CD8-positive, alpha-beta T cell (primary cell): ENCODE measurements at regions of chr1 and their contacts with region 1.

Region 1: GRCh38 chr1:205227584-205228006 is at the start of gene TMCC2:
- DNase-seq: peak; percentile 59 to 92 (median 85)
- ATAC-seq: peak; percentile 82
- H3K4me3 ChIP-seq: peak within 1 kb of the TSS; percentile 60 to 70
- H3K4me3 Mint-ChIP-seq: peak within 1 kb of the TSS; percentile 91
- H3K27ac ChIP-seq: no peak within 1 kb of the TSS
- H3K27ac Mint-ChIP-seq: peak within 1 kb of the TSS; percentile 82
- H3K4me1 ChIP-seq: peaks cover 12% of the 10 kb centered on the region
- H3K4me1 Mint-ChIP-seq: peaks cover 31% of the 10 kb centered on the region
- H3K27me3 ChIP-seq: no peaks in the 10 kb centered on the region
- H3K27me3 Mint-ChIP-seq: peaks cover 5% of the 10 kb centered on the region
- CTCF ChIP-seq: no peak
- total RNA-seq, gene TMCC2: 1.5 to 2.0 TPM

Region 2: DNA sequence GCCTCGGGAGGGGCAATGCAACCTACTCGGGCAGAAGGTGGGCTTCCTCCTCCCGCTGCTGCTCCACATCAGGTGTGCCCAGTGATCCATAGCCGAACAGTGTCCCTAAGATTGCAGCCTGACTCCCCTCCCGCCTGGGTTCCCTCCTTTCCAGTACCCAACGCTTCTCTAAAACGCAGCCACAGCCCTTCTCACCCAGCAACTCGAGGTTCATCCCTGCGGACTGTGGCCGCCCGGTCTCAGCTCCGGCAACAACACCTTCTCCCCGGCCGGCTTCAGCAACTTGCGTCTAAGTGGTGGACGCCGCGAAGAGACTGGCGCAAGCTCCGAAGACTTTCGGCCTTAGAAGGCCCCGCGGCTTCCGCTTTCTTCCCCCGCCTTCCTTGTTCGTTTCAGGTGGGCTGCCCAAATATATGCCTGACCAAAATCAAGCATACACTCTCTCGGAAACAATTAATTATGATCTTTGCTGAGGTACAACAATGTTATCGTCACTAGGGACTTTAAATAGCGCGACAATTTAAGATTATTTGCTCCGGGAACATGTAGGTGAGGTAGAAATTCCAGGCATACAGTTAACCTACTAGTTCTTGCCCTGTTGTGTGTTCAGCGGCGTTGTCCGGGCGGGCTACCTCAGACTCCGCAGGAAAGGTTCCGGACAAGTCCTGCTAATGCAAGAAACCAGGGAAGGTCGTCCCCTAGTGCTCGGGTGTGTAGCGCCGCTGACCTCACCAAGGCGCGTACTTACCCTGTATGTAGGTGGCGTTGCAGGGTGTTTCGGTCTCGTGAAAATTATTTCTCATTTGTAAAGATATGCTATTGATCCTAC is 105.7 kb before region 1 on chr1 and contains the start of gene RBBP5:
- CTCF ChIA-PET with region 1: interaction called, 10 read pairs
- POLR2A ChIA-PET with region 1: interaction called, 6 read pairs
- intact Hi-C with region 1: loop called in 1 of 2 experiments (anchors 1 kb)
- DNase-seq: peak; percentile 92 to 98 (median 95)
- ATAC-seq: peak; percentile 93
- H3K4me3 ChIP-seq: peak within 1 kb of the TSS; percentile 91 to 95
- H3K4me3 Mint-ChIP-seq: peak within 1 kb of the TSS; percentile 96
- H3K27ac ChIP-seq: peak within 1 kb of the TSS; percentile 88 to 97
- H3K27ac Mint-ChIP-seq: peak within 1 kb of the TSS; percentile 100
- H3K4me1 ChIP-seq: peaks cover 26% of the 10 kb centered on the region
- H3K4me1 Mint-ChIP-seq: peaks cover 46% of the 10 kb centered on the region
- H3K27me3 ChIP-seq: no peaks in the 10 kb centered on the region
- H3K27me3 Mint-ChIP-seq: no peaks in the 10 kb centered on the region
- CTCF ChIP-seq: peak; percentile 59
- total RNA-seq, gene RBBP5: 23.9 to 25.7 TPM

Region 3: DNA sequence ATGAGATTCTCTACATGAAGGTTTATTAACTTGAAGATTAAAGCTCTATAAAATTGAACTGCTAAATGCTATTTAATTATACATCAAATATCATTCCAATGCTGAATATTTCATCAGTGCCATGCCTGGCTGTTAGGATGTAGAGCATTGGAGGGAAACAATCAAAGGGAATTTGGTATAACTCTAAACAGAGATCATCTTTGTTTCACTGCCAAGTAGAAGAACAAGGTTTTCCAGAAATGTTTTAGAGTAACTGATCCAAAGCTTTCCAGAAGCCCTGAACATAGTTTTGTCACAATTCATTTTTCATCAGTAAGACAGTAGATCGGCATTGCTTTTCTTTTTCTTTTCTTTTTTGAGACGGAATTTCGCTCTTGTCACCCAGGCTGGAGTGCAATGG is 10.2 kb before region 1 on chr1:
- CTCF ChIA-PET with region 1: interaction called, 15 read pairs
- POLR2A ChIA-PET with region 1: no interaction called
- intact Hi-C with region 1: no loop called
- DNase-seq: no peak
- ATAC-seq: no peak
- H3K4me3 ChIP-seq: no peak overlapping the region
- H3K4me3 Mint-ChIP-seq: no peak overlapping the region
- H3K27ac ChIP-seq: no peak overlapping the region
- H3K27ac Mint-ChIP-seq: no peak overlapping the region
- H3K4me1 ChIP-seq: peaks cover under 1% of the 10 kb centered on the region
- H3K4me1 Mint-ChIP-seq: peaks cover 15% of the 10 kb centered on the region
- H3K27me3 ChIP-seq: no peaks in the 10 kb centered on the region
- H3K27me3 Mint-ChIP-seq: peaks cover 4% of the 10 kb centered on the region
- CTCF ChIP-seq: no peak

Region 4: GRCh38 chr1:205273551-205273982 is 46.0 kb after region 1 on chr1:
- CTCF ChIA-PET with region 1: interaction called, 13 read pairs
- POLR2A ChIA-PET with region 1: interaction called, 4 read pairs
- intact Hi-C with region 1: loop called in 1 of 2 experiments (anchors 5 kb)
- DNase-seq: peak; percentile 76 to 94 (median 86)
- ATAC-seq: peak; percentile 88
- H3K4me3 ChIP-seq: peak overlapping the region in 1 of 2 experiments; percentile 44
- H3K4me3 Mint-ChIP-seq: peak overlapping the region; percentile 61
- H3K27ac ChIP-seq: no peak overlapping the region
- H3K27ac Mint-ChIP-seq: peak overlapping the region; percentile 83
- H3K4me1 ChIP-seq: peaks cover 46% of the 10 kb centered on the region
- H3K4me1 Mint-ChIP-seq: peaks cover 40% of the 10 kb centered on the region
- H3K27me3 ChIP-seq: no peaks in the 10 kb centered on the region
- H3K27me3 Mint-ChIP-seq: no peaks in the 10 kb centered on the region
- CTCF ChIP-seq: peak; percentile 95

Region 5: DNA sequence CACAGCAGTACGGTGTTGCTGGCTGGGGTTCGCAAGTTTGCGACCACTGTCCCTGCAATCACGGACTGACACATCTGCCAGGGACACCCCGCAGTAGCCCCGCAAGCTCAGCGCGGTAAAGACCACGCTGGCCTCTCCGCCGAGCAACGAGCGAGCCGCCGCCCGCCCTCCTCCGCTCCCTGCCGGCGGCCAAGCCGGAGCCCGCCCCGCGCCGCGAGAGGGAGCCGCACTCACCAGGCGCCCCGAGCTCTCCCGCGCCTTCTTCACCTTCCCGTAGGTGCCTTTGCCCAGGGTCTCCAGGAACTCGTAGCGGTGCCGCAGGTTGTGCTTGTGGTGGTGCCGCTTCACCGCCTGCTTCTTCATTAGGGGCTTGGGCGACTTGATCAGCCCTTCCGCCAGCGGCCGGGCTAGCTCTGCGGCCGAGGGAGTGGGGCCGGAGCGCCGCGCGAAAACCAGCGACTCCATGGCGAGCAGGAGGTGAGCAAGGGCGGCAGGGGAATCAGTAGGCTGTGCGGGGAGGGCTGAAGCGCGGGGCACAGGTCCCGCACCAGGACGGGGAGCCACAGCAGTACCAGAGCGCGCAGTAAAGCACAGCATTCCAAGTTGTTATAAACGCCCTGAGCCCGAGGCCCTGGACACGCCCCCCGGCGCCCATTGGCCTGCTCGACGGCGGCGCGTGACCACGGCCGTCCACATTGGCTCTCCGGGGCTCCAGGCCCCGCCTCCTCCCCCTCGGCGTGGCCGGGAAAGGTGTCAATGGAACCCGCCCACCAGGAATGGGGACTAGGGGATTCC is 93.8 kb after region 1 on chr1 and contains the start of gene NUAK2:
- CTCF ChIA-PET with region 1: interaction called, 10 read pairs
- POLR2A ChIA-PET with region 1: interaction called, 3 read pairs
- intact Hi-C with region 1: loop called in 1 of 2 experiments (anchors 2 kb)
- DNase-seq: peak; percentile 56 to 92 (median 86)
- ATAC-seq: peak; percentile 88
- H3K4me3 ChIP-seq: peak within 1 kb of the TSS; percentile 73 to 99
- H3K4me3 Mint-ChIP-seq: peak within 1 kb of the TSS; percentile 98
- H3K27ac ChIP-seq: peak within 1 kb of the TSS; percentile 68 to 72
- H3K27ac Mint-ChIP-seq: peak within 1 kb of the TSS; percentile 96
- H3K4me1 ChIP-seq: peaks cover 50% of the 10 kb centered on the region
- H3K4me1 Mint-ChIP-seq: peaks cover 71% of the 10 kb centered on the region
- H3K27me3 ChIP-seq: no peaks in the 10 kb centered on the region
- H3K27me3 Mint-ChIP-seq: no peaks in the 10 kb centered on the region
- CTCF ChIP-seq: peak; percentile 32
- total RNA-seq, gene NUAK2: 17.1 to 18.3 TPM

Region 6: GRCh38 chr1:205750138-205751035 is 522.8 kb after region 1 on chr1 and contains the start of gene NUCKS1:
- CTCF ChIA-PET with region 1: no interaction called
- POLR2A ChIA-PET with region 1: no interaction called
- intact Hi-C with region 1: loop called in 1 of 2 experiments (anchors 5 kb)
- DNase-seq: peak; percentile 91 to 99 (median 96)
- ATAC-seq: peak; percentile 77
- H3K4me3 ChIP-seq: peak within 1 kb of the TSS; percentile 78 to 91
- H3K4me3 Mint-ChIP-seq: peak within 1 kb of the TSS; percentile 93
- H3K27ac ChIP-seq: peak within 1 kb of the TSS; percentile 79 to 82
- H3K27ac Mint-ChIP-seq: peak within 1 kb of the TSS; percentile 98
- H3K4me1 ChIP-seq: peaks cover 30% of the 10 kb centered on the region
- H3K4me1 Mint-ChIP-seq: peaks cover 37% of the 10 kb centered on the region
- H3K27me3 ChIP-seq: no peaks in the 10 kb centered on the region
- H3K27me3 Mint-ChIP-seq: no peaks in the 10 kb centered on the region
- CTCF ChIP-seq: no peak
- total RNA-seq, gene NUCKS1: 70.5 to 95.3 TPM